ENCODE measurements at regions of chr10 and their contacts with region 1.

Region 1: GRCh38 chr10:32028710-32029109 is 27.5 kb downstream of the KIF5B start:
- H3K4me3 Mint-ChIP-seq: no peak overlapping the region
- H3K27ac Mint-ChIP-seq: no peak overlapping the region
- H3K4me1 Mint-ChIP-seq: peaks cover 19% of the 10 kb centered on the region
- H3K27me3 Mint-ChIP-seq: no peaks in the 10 kb centered on the region

Region 2: DNA sequence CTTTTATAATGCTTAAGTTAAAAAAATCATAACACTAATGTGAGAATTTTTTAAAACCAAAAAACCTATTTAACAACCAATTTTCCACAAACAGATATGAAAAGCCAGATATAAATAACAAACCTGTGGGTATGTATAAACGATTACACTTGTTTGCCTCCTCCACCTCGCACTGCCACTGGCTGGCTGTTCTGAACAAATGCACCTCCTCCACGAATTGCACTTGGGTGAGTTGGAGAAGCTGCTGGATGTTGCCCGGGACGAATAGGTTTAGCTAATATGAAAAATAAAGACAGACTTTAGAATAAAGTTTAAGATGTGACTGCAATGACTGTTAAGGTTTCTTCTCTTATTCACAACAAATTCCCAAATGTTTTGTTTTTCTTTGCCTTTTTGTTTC is 13.3 kb before region 1 on chr10:
- intact Hi-C with region 1: loop called (anchors 2 kb)
- H3K4me3 Mint-ChIP-seq: no peak overlapping the region
- H3K27ac Mint-ChIP-seq: no peak overlapping the region
- H3K4me1 Mint-ChIP-seq: no peaks in the 10 kb centered on the region
- H3K27me3 Mint-ChIP-seq: no peaks in the 10 kb centered on the region

Region 3: GRCh38 chr10:32065856-32066255 is 37.1 kb after region 1 on chr10:
- intact Hi-C with region 1: no loop called
- H3K4me3 Mint-ChIP-seq: peak overlapping the region; percentile 7
- H3K27ac Mint-ChIP-seq: peak overlapping the region; percentile 92
- H3K4me1 Mint-ChIP-seq: peaks cover 62% of the 10 kb centered on the region
- H3K27me3 Mint-ChIP-seq: no peaks in the 10 kb centered on the region